Ascending aorta (tissue), 2 donors: ENCODE measurements at regions of chr11 and their contacts with region 1.

Region 1: GRCh38 chr11:46700241-46701077 is at the starts of genes ARHGAP1 and ZNF408:
- DNase-seq: peak; percentile 96 to 100
- H3K4me3 ChIP-seq: peak within 1 kb of the TSS; percentile 79 to 82
- H3K27ac ChIP-seq: peak within 1 kb of the TSS; percentile 85 to 91
- H3K4me1 ChIP-seq: peaks cover 33 to 51% of the 10 kb centered on the region in 2 donors
- H3K27me3 ChIP-seq: no peaks in the 10 kb centered on the region
- CTCF ChIP-seq: no peak
- total RNA-seq, gene ARHGAP1: 104 TPM
- total RNA-seq, gene ZNF408: 9.7 TPM

Region 2: GRCh38 chr11:46649180-46649738 is 51.2 kb before region 1 on chr11:
- intact Hi-C with region 1: loop called (anchors 5 kb)
- DNase-seq: peak; percentile 29 to 81
- H3K4me3 ChIP-seq: peak overlapping the region in 1 of 2 donors; percentile 15
- H3K27ac ChIP-seq: peak overlapping the region; percentile 79 to 84
- H3K4me1 ChIP-seq: peaks cover 14 to 23% of the 10 kb centered on the region in 2 donors
- H3K27me3 ChIP-seq: no peaks in the 10 kb centered on the region
- CTCF ChIP-seq: no peak

Region 3: GRCh38 chr11:46710821-46711269 is 10.4 kb after region 1 on chr11:
- intact Hi-C with region 1: loop called (anchors 1 kb)
- DNase-seq: peak; percentile 72 to 94
- H3K4me3 ChIP-seq: no peak overlapping the region
- H3K27ac ChIP-seq: peak overlapping the region; percentile 95 to 96
- H3K4me1 ChIP-seq: peaks cover 5 to 37% of the 10 kb centered on the region in 2 donors
- H3K27me3 ChIP-seq: no peaks in the 10 kb centered on the region
- CTCF ChIP-seq: no peak

Region 4: DNA sequence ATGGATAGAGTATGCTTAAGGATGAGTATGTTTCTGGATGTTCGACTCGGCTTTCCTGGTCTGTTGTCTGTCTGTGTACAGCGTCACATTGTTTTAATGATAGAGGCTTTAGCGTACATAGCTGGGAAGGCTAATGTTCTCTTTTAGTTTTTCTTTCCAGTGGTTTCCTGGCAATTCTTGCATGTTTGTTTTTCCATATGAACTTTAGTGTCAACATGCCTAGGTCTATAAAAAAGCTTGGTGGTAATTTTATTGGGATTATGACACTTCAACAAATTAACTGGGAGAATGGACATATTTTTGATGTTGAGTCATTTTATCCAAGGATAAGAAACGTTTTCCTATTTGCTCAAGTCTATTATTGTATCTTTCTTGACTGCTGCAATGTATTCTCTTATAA is 36.2 kb after region 1 on chr11:
- intact Hi-C with region 1: loop called (anchors 5 kb)
- DNase-seq: no peak
- H3K4me3 ChIP-seq: no peak overlapping the region
- H3K27ac ChIP-seq: peak overlapping the region in 1 of 2 donors; percentile 4
- H3K4me1 ChIP-seq: no peaks in the 10 kb centered on the region
- H3K27me3 ChIP-seq: no peaks in the 10 kb centered on the region
- CTCF ChIP-seq: no peak